Activated T-helper 2 cell treated with anti-CD3 and anti-CD28 coated beads, Interferon-gamma antibody, Interleukin-2, Interleukin-4, amounts not matched to agents 10 μg/mL and 5 μg/mL and 100 μg/mL, durations not matched to agents 14 hours and 24 hours and 36 hours (primary cell): ENCODE measurements at regions of chr6 and their contacts with region 1.

Region 1: DNA sequence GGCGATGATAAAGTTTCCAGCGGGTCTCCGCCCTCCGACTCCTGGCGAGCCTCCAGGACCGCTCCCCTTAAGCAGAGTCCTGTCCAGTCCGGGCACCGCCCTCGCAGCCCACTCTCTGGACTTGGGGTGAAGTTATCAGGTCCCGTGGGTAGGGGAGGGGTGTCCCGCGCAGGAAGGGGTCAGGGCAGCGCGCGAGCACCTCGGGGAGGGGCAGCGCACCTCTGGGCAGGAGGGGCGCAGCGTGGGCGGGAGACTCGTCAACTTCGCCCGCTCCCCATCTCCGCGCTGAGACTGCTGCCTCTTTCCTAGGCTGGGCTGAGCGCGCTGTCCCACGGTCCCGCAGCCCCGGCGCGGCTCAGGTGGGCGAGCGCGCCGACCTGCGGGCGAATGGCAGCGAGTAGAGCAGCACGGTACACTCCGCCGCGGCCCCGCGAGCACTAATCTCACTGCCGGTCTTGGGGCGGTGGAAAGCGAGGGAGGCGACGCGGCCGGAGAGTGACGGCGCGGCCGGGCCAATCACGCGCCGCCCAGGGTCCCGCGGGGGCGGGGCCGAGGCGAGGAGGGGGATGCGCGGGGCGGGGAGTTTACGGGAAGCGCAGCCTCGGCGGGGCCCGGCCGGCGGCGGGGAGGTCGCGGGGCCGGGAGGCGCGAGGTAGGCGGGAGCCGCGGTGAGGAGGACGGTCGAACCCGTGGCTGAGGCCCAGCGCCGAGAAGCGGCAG is at the start of gene MAN1A1:
- DNase-seq: peak; percentile 90
- H3K4me3 Mint-ChIP-seq: peak within 1 kb of the TSS; percentile 94
- H3K27ac Mint-ChIP-seq: peak within 1 kb of the TSS; percentile 85
- H3K4me1 Mint-ChIP-seq: peaks cover 53% of the 10 kb centered on the region
- H3K27me3 Mint-ChIP-seq: no peaks in the 10 kb centered on the region
- total RNA-seq, gene MAN1A1: 43.8 and 45.0 TPM in 2 replicates

Region 2: DNA sequence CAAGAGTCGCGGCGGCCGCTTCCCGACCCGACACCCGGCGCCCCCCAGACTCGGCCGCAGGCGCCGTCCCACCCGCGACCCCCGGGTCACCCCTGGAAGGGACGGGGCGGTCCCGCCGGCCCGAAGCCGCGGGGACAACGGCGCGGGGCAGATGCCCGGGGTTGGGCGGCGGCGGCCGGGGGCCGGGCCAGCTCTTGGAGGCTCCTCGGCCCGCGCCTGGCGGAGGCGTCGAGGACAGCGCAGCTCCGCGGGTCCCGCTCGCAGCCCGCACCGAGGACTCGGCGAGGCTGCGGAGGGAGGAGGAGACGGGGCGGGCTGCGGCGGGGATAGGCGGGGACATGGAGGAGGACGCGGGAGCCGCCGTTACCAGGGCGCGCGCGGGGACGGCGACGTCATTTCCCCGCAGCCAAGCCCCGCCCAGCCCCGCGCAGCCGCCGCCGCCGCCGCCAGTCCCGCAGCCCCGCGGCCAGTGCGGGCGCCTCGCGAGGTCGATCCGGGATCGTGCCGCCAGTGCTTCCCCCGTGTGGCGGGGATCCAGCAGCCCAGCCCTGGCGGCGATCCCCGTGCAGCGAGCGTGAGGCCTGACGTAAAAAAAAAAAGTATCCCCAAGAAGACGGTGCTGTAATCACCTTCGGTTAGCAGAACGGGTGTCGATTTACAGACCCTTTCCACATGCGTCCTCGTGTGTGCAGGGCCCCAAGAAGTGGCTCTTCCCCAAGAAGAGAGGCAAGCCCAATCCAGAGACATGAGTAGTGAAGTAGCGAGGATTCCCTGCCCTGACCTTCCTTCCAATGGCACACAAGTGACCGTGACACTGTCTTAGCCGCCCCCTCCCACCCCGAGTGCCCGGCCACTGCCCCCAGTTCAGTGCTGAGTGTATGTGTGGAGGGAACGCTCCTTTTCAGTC is 270.9 kb before region 1 on chr6 and contains the start of gene FAM184A:
- intact Hi-C with region 1: loop called (anchors 2 kb)
- DNase-seq: peak; percentile 67
- H3K4me3 Mint-ChIP-seq: peak within 1 kb of the TSS; percentile 89
- H3K27ac Mint-ChIP-seq: peak within 1 kb of the TSS; percentile 69
- H3K4me1 Mint-ChIP-seq: peaks cover 28% of the 10 kb centered on the region
- H3K27me3 Mint-ChIP-seq: peaks cover 8% of the 10 kb centered on the region
- total RNA-seq, gene FAM184A: 2.6 and 2.9 TPM in 2 replicates

Region 3: DNA sequence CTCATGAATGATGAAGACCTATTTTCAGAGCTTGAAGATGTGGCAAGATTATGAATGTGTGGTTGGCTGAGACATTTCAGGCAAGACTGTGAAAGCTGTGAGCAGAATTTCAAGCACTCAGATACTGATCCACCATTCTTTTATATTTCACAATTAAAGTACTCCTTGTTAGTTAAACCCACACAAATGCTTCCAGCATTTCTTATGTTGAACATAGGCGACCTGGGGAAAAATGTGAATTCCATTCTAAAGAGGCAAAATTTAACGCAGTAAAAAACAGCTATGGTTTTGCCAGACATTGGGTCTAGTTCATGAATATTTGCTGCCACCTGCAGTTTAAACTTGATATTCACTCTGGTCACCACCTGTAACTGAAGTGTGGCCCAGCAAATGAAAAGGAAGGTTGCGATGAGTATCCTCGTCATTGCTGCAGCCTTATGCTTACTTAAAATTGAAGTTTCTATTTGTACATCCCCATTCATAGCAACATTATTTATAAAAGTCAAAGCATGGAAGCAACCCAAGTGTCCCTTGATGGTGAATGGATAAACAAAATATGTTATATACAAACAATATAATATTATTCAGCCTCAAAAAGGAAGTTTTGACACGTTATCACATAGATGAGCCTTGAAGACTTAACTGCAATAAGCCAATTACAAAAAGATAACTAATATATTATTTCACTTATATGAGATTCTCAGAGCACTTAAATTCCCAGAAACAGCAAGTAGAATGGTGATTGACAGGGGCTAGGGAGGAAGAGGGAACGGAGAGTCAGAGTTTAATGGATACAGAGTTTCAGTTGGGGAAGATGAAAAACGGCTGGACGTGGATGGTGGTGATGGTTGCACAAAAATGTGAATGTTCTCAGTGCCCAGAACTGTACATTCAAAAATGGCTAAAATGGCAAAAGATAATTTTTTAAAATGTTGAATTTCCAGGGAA is 238.6 kb before region 1 on chr6:
- intact Hi-C with region 1: no loop called
- DNase-seq: peak; percentile 26
- H3K4me3 Mint-ChIP-seq: no peak overlapping the region
- H3K27ac Mint-ChIP-seq: no peak overlapping the region
- H3K4me1 Mint-ChIP-seq: peaks cover 16% of the 10 kb centered on the region
- H3K27me3 Mint-ChIP-seq: peaks cover 6% of the 10 kb centered on the region

Region 4: GRCh38 chr6:119147101-119148053 is 202.1 kb before region 1 on chr6:
- intact Hi-C with region 1: loop called (anchors 1 kb)
- DNase-seq: peak; percentile 28
- H3K4me3 Mint-ChIP-seq: no peak overlapping the region
- H3K27ac Mint-ChIP-seq: peak overlapping the region; percentile 79
- H3K4me1 Mint-ChIP-seq: peaks cover 55% of the 10 kb centered on the region
- H3K27me3 Mint-ChIP-seq: no peaks in the 10 kb centered on the region

Region 5: GRCh38 chr6:119313937-119314884 is 35.3 kb before region 1 on chr6:
- intact Hi-C with region 1: loop called (anchors 1 kb)
- DNase-seq: peak; percentile 39
- H3K4me3 Mint-ChIP-seq: peak overlapping the region; percentile 66
- H3K27ac Mint-ChIP-seq: peak overlapping the region; percentile 99
- H3K4me1 Mint-ChIP-seq: peaks cover 80% of the 10 kb centered on the region
- H3K27me3 Mint-ChIP-seq: no peaks in the 10 kb centered on the region

Region 6: DNA sequence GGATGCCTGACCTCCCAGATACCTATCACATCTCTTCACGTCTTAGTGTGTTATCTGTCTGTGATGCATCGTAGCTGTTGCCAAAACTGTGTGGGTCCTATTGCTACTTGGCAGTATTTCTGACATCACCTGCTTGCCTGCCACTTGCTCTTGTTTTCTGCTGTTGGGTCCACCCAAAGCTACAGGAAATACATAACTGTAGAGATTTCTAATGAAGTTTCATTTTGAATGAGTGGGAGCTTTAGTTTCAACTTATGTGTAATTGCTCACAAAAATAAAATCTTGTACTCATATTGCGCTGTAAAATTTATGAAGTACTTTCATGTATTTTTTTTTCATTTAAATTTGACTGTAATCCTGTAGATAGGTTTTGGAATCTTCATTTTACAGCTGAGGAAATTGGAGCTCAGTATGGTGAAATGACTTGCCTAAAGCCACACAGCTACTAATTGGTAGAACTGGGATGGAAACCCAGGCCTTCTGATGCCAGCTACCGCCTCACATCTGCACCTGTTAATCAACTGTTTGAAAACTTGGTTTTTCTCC is 113.7 kb after region 1 on chr6:
- intact Hi-C with region 1: loop called (anchors 1 kb)
- DNase-seq: peak; percentile 37
- H3K4me3 Mint-ChIP-seq: peak overlapping the region; percentile 11
- H3K27ac Mint-ChIP-seq: peak overlapping the region; percentile 84
- H3K4me1 Mint-ChIP-seq: peaks cover 65% of the 10 kb centered on the region
- H3K27me3 Mint-ChIP-seq: no peaks in the 10 kb centered on the region

Region 7: GRCh38 chr6:119736296-119737021 is 387.0 kb after region 1 on chr6:
- intact Hi-C with region 1: loop called (anchors 10 kb)
- DNase-seq: no peak
- H3K4me3 Mint-ChIP-seq: no peak overlapping the region
- H3K27ac Mint-ChIP-seq: no peak overlapping the region
- H3K4me1 Mint-ChIP-seq: no peaks in the 10 kb centered on the region
- H3K27me3 Mint-ChIP-seq: peaks cover 36% of the 10 kb centered on the region

Region 8: GRCh38 chr6:121334299-121335086 is 1985.0 kb after region 1 on chr6 and contains the start of gene TBC1D32:
- intact Hi-C with region 1: loop called (anchors 10 kb)
- DNase-seq: peak; percentile 84
- H3K4me3 Mint-ChIP-seq: peak within 1 kb of the TSS; percentile 95
- H3K27ac Mint-ChIP-seq: peak within 1 kb of the TSS; percentile 99
- H3K4me1 Mint-ChIP-seq: peaks cover 32% of the 10 kb centered on the region
- H3K27me3 Mint-ChIP-seq: peaks cover 5% of the 10 kb centered on the region
- total RNA-seq, gene TBC1D32: 6.6 and 8.3 TPM in 2 replicates